Posterior cingulate gyrus (tissue), 11 donors: ENCODE measurements at regions of chr1 and their contacts with region 1.

Region 1: GRCh38 chr1:172398970-172399755 is 21.3 kb upstream of the C1orf105 start:
- DNase-seq: peak in 8 of 10 donors; percentile 15 to 84 (median 51)

Region 2: DNA sequence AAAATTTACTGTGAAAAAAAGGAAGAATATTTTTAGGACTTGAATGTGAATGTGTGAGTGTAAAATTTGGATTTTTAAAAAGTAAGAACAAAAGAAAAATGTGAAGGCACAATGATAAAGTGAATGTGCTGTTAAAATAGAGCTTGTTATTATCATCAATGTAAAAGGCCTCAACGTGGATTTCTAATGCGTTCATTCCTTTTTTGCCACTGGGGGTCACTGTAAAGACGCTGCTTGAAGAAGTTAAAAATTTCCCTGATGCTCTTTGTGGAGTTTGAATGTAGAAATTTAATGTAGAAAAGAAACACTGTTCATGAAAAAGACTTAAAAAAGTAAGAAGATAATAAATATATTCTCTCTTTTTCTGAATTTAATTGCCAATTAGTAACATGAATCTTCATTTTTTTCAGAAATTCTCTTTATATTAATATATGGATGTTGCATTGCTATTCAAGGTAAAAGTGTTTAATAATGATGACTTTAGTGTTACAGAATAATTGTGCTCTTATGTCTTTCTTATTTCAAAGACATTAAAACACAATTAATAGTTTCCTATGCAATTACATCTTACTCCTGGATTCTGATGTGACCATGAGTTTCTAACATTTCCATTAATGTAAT is 396.3 kb before region 1 on chr1:
- intact Hi-C with region 1: loop called (anchors 1 kb)
- DNase-seq: peak in 2 of 10 donors; percentile 13 to 31

Region 3: DNA sequence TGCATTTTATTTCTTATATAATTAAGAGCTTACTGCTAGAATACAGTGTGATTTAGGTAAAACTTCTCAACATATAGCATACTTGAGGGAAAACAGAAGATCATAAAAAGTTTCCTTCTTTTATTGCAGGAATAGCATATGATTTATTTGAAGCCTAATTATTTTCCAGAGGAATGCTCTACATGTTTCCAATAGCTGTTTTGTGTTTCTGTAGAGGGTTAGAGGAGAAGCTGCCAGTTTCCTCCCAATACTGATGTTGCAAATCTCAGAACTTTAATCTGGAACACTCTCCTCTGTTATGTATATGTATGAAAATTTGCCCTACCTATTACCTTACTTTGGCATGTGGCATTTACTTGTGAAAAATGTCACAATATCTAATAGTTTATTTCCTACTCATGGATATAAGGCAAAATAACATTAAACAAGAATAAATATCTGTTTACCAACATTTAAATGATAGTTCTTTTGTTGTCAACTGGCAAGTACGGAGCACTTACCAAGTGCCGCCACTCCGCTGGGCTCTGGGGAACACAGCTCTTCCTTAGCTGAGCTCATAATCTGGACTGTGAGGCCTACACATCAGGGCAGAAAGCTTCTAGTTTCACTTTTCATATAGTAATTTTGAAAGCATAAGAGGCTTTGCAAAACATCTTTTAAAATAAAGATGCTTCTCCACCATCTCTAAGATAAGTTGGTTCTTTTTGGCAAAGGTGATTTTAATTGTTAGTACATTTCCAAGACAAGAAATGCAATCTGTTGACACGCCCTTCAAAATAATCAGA is 218.5 kb before region 1 on chr1:
- intact Hi-C with region 1: loop called (anchors 10 kb)
- DNase-seq: peak; percentile 9 to 79 (median 26)

Region 4: DNA sequence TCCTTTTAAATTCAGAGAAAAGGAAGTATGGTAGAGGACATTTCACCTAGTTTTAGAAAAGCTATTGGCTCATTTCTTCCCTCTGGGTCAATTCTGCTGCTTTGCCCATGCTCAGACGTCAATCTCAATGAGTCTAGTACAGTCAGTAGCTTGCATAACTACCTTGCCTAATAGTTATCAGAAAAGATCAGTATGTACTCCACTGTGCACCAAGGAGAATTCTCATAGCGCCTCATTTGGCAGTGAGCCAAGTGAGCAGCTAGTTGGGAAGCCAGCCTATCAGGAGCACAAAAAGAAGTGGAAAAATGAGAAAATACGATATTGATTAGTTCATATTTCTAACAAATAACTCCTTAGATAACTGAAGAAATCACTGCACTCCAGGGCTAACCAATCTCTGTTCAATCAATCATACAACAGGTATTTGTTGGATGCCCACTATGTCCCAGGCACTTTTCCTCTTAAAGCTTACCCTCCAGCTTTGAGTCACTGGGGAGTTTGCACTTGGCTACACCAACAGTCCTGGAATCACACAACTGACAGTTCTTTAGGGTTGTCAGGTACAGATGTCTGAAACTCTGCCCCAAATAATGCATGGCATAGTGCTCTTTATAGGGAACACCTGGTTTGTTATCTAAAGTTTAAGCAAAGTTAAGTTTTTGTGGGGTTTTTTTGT is 1128.1 kb after region 1 on chr1:
- intact Hi-C with region 1: no loop called
- DNase-seq: no peak